SK-N-SH (cell line): ENCODE measurements at regions of chr3 and their contacts with region 1.

Region 1: GRCh38 chr3:119084371-119085072 is 49.9 kb upstream of the IGSF11 start:
- DNase-seq: no peak
- H3K4me3 ChIP-seq: no peak overlapping the region
- H3K27ac ChIP-seq: no peak overlapping the region
- H3K4me1 ChIP-seq: no peaks in the 10 kb centered on the region; a peak in 1 of 4 replicates
- H3K27me3 ChIP-seq: no peaks in the 10 kb centered on the region
- CTCF ChIP-seq: no peak
- EP300 ChIP-seq: no peak
- RAD21 ChIP-seq: no peak

Region 2: DNA sequence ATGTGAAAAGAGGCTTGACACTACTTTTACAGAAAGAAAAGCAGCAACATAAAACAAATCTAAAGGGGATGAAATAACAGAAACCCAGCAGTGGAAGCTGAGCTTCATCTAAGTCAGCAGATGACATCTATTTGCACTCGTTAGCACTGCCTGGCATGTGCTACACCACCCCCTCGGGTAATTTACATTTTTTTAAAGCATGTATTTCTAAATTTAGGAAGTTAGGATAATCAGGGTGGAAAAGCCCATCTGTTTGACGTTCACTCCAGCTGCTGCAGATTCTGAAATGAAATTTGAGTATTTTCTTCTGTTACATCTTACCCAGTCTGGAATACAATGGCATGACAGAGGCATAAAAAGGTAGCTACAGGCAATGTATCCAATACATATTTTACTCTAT is 70.6 kb before region 1 on chr3:
- CTCF ChIA-PET with region 1: no interaction called
- POLR2A ChIA-PET with region 1: no interaction called
- DNase-seq: no peak
- H3K4me3 ChIP-seq: no peak overlapping the region
- H3K27ac ChIP-seq: no peak overlapping the region
- H3K4me1 ChIP-seq: peaks cover 0 to 3% of the 10 kb centered on the region in 2 experiments; a peak in 2 of 4 replicates
- H3K27me3 ChIP-seq: no peaks in the 10 kb centered on the region
- CTCF ChIP-seq: no peak
- EP300 ChIP-seq: no peak
- RAD21 ChIP-seq: no peak

Region 3: GRCh38 chr3:119073258-119074001 is 11.1 kb before region 1 on chr3:
- CTCF ChIA-PET with region 1: no interaction called
- POLR2A ChIA-PET with region 1: no interaction called
- DNase-seq: no peak
- H3K4me3 ChIP-seq: no peak overlapping the region
- H3K27ac ChIP-seq: no peak overlapping the region
- H3K4me1 ChIP-seq: no peaks in the 10 kb centered on the region
- H3K27me3 ChIP-seq: no peaks in the 10 kb centered on the region
- CTCF ChIP-seq: no peak
- EP300 ChIP-seq: no peak
- RAD21 ChIP-seq: no peak

Region 4: GRCh38 chr3:119098619-119099222 is 14.2 kb after region 1 on chr3:
- CTCF ChIA-PET with region 1: interaction called, 11 read pairs
- POLR2A ChIA-PET with region 1: no interaction called
- DNase-seq: peak; percentile 38
- H3K4me3 ChIP-seq: no peak overlapping the region; a peak in 1 of 4 replicates
- H3K27ac ChIP-seq: no peak overlapping the region
- H3K4me1 ChIP-seq: no peaks in the 10 kb centered on the region
- H3K27me3 ChIP-seq: no peaks in the 10 kb centered on the region
- CTCF ChIP-seq: peak; percentile 89
- EP300 ChIP-seq: no peak
- RAD21 ChIP-seq: peak; percentile 95

Region 5: GRCh38 chr3:119149484-119149883 is 65.0 kb after region 1 on chr3:
- CTCF ChIA-PET with region 1: no interaction called
- POLR2A ChIA-PET with region 1: no interaction called
- DNase-seq: no peak
- H3K4me3 ChIP-seq: no peak overlapping the region
- H3K27ac ChIP-seq: no peak overlapping the region
- H3K4me1 ChIP-seq: no peaks in the 10 kb centered on the region; a peak in 1 of 4 replicates
- H3K27me3 ChIP-seq: no peaks in the 10 kb centered on the region
- CTCF ChIP-seq: no peak
- EP300 ChIP-seq: no peak
- RAD21 ChIP-seq: no peak

Region 6: GRCh38 chr3:119331661-119332060 is 247.1 kb after region 1 on chr3:
- CTCF ChIA-PET with region 1: no interaction called
- POLR2A ChIA-PET with region 1: no interaction called
- DNase-seq: no peak
- H3K4me3 ChIP-seq: no peak overlapping the region
- H3K27ac ChIP-seq: peak overlapping the region; percentile 28 to 95; a peak in 2 of 4 replicates
- H3K4me1 ChIP-seq: peaks cover 4 to 50% of the 10 kb centered on the region in 2 experiments; a peak in 2 of 4 replicates
- H3K27me3 ChIP-seq: no peaks in the 10 kb centered on the region
- CTCF ChIP-seq: no peak
- EP300 ChIP-seq: no peak
- RAD21 ChIP-seq: no peak